Activated CD4-positive, alpha-beta memory T cell treated with anti-CD3 and anti-CD28 coated beads for 36 hours (primary cell): ENCODE measurements at regions of chr6 and their contacts with region 1.

Region 1: DNA sequence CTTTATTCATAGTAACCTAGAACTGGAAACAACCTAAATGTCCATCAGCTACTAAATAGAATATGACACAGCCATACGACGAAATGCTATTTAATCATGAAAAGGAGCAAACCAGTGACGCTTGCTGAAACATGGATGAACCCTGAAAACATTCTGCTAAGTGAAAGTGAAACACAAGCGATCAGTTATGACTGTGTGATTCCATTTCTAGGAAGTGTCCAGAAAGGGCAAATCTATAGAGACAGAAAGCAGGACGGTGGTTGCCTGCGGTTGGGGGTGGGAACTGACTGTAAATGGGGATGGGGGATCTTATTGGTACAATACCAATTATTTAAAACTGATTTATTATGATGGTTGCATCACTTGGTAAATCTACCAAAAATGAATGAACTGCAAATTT is 126.8 kb downstream of the IPCEF1 start:
- DNase-seq: peak; percentile 88
- H3K4me3 Mint-ChIP-seq: peak overlapping the region; percentile 71
- H3K27ac Mint-ChIP-seq: peak overlapping the region; percentile 89
- H3K4me1 Mint-ChIP-seq: peaks cover 80% of the 10 kb centered on the region
- H3K27me3 Mint-ChIP-seq: no peaks in the 10 kb centered on the region

Region 2: GRCh38 chr6:154080461-154081189 is 149.2 kb before region 1 on chr6:
- CTCF ChIA-PET with region 1: no interaction called
- POLR2A ChIA-PET with region 1: no interaction called
- intact Hi-C with region 1: no loop called
- DNase-seq: no peak
- H3K4me3 Mint-ChIP-seq: no peak overlapping the region
- H3K27ac Mint-ChIP-seq: no peak overlapping the region
- H3K4me1 Mint-ChIP-seq: no peaks in the 10 kb centered on the region
- H3K27me3 Mint-ChIP-seq: peaks cover 3% of the 10 kb centered on the region

Region 3: DNA sequence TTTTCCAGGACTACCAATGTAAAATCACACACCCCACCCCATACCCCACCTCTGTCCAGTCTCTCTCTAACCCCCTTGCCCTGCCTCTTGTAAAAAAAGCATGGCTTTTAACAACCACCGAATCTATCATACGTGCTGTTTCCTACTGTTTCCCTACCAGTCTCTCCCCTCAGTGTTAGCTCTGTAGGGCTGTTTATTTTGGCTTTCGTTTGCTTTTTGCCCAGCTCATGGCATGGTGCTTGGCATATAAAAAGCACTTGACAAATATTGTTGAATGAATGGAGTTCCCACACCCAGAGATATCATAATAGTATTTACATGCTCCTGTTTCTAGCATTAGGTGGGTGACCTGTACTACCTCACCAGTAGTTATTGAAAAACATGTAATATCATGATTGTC is 42.6 kb before region 1 on chr6:
- CTCF ChIA-PET with region 1: no interaction called
- POLR2A ChIA-PET with region 1: no interaction called
- intact Hi-C with region 1: no loop called
- DNase-seq: no peak
- H3K4me3 Mint-ChIP-seq: no peak overlapping the region
- H3K27ac Mint-ChIP-seq: no peak overlapping the region
- H3K4me1 Mint-ChIP-seq: peaks cover 36% of the 10 kb centered on the region
- H3K27me3 Mint-ChIP-seq: no peaks in the 10 kb centered on the region

Region 4: DNA sequence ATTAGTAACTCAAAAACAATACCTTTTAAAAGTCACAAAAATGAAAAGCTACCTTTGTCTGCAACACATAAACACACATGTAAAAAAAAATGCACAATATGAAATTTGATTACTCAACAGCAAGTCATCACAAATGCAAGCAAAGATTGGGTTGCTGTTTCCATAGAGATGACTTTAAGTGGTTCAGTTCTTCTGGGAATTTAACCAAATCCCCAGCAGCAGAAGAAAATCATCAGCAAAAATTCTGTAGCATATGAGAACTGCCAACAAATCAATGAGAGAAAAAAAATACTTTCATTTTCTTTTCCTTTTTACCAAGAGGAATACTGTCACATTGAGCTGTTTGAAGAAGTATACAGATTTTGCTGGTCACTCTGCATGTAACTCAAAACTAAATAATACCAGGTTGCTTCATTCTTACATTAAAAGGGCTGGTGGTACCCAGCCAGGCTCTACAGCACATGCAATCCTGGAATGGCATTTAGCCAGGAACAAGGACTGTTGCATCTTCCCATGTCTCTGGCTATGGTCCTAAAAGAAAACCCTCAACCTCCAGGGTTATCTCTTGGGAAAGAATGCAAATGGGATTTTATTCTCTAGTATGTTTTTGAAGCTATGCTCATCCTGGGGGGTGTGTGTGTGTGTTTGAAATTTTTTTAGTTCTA is 32.5 kb before region 1 on chr6:
- CTCF ChIA-PET with region 1: no interaction called
- POLR2A ChIA-PET with region 1: no interaction called
- intact Hi-C with region 1: loop called (anchors 1 kb)
- DNase-seq: no peak
- H3K4me3 Mint-ChIP-seq: peak overlapping the region; percentile 14
- H3K27ac Mint-ChIP-seq: peak overlapping the region; percentile 39
- H3K4me1 Mint-ChIP-seq: peaks cover 55% of the 10 kb centered on the region
- H3K27me3 Mint-ChIP-seq: no peaks in the 10 kb centered on the region

Region 5: GRCh38 chr6:154218301-154218700 is 11.5 kb before region 1 on chr6:
- CTCF ChIA-PET with region 1: interaction called, 5 read pairs
- POLR2A ChIA-PET with region 1: interaction called, 3 read pairs
- intact Hi-C with region 1: loop called (anchors 1 kb)
- DNase-seq: peak; percentile 57
- H3K4me3 Mint-ChIP-seq: peak overlapping the region; percentile 68
- H3K27ac Mint-ChIP-seq: peak overlapping the region; percentile 88
- H3K4me1 Mint-ChIP-seq: peaks cover 62% of the 10 kb centered on the region
- H3K27me3 Mint-ChIP-seq: no peaks in the 10 kb centered on the region

Region 6: GRCh38 chr6:154267508-154268106 is 37.8 kb after region 1 on chr6:
- CTCF ChIA-PET with region 1: no interaction called
- POLR2A ChIA-PET with region 1: interaction called, 3 read pairs
- intact Hi-C with region 1: loop called (anchors 2 kb)
- DNase-seq: peak; percentile 17
- H3K4me3 Mint-ChIP-seq: no peak overlapping the region
- H3K27ac Mint-ChIP-seq: no peak overlapping the region
- H3K4me1 Mint-ChIP-seq: peaks cover 21% of the 10 kb centered on the region
- H3K27me3 Mint-ChIP-seq: no peaks in the 10 kb centered on the region

Region 7: GRCh38 chr6:154390034-154390433 is 160.2 kb after region 1 on chr6:
- CTCF ChIA-PET with region 1: no interaction called
- POLR2A ChIA-PET with region 1: no interaction called
- intact Hi-C with region 1: no loop called
- DNase-seq: no peak
- H3K4me3 Mint-ChIP-seq: no peak overlapping the region
- H3K27ac Mint-ChIP-seq: no peak overlapping the region
- H3K4me1 Mint-ChIP-seq: no peaks in the 10 kb centered on the region
- H3K27me3 Mint-ChIP-seq: peaks cover 32% of the 10 kb centered on the region

Region 8: DNA sequence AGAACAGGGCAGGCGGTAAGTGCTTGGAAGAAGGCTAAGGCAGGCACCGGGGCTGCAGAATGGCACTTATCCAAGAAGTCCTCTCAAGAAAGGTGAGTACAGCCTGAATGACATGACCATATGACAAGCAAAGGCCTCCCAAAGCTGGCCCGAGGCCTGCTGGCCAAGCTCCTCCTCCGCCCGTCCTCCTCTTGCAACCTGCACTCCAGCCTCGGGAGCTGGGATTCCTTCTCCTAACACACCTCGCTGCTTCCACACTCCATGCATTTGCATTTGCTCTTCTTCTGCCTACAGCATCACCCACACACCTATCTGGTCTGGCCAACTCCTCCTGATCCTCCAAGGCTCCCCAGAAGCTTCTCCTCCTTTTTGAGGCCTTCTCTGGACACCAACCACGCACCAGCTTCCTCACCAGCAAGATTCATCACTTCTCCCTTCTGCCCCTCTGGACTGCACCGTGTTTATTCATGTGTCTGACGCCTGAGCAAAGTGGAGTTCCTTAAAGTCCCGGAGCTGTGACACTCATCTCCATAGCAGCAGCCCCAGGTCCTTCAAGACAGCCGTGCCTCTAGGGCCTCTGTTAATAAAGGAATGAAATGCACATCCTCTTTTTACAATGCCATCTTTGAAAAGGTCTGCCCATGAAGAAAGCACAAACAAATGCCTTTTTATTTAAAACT is 248.4 kb after region 1 on chr6:
- CTCF ChIA-PET with region 1: no interaction called
- POLR2A ChIA-PET with region 1: no interaction called
- intact Hi-C with region 1: no loop called
- DNase-seq: no peak
- H3K4me3 Mint-ChIP-seq: no peak overlapping the region
- H3K27ac Mint-ChIP-seq: no peak overlapping the region
- H3K4me1 Mint-ChIP-seq: no peaks in the 10 kb centered on the region
- H3K27me3 Mint-ChIP-seq: peaks cover 2% of the 10 kb centered on the region